ENCODE measurements at regions of chr2 and their contacts with region 1.

Region 1: DNA sequence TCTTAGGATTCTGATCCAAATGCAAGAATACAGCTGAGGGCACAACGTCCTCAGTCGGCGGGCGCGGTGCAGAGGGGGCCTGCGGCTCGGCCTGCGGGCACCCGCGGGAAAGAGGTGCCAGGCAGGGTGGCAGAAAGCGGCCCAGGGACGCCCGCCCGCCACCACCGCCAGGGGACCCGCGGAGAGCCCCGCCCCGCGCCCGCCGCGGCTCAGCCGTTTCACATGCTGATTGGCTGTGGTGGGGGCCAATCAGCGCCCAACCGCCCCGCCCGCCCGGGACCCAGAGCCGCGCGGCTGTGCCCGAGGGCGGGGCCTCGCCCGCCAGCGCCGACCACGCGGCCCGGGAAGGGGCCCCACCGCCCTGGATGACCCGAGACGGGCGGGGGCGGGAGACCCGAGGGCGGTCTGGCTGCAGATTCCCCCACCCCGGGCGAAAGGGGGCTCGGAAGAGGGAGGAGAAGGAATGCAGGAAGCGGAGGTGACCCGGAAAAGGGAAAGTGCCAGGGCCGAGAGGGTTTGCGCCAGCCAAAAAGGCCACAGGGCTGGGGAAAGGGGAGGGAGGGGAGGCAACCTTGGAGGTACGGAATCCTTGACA is 8.0 kb downstream of the IRS1 start:
- DNase-seq: peak; percentile 84 to 94 (median 92)
- ATAC-seq: peak; percentile 96
- H3K4me3 ChIP-seq: peak overlapping the region; percentile 70 to 72
- H3K4me3 Mint-ChIP-seq: peak overlapping the region; percentile 94
- H3K27ac ChIP-seq: peak overlapping the region; percentile 86 to 90
- H3K27ac Mint-ChIP-seq: peak overlapping the region; percentile 98
- H3K4me1 ChIP-seq: peaks cover 18% of the 10 kb centered on the region
- H3K4me1 Mint-ChIP-seq: peaks cover 44% of the 10 kb centered on the region
- H3K27me3 ChIP-seq: no peaks in the 10 kb centered on the region
- H3K27me3 Mint-ChIP-seq: no peaks in the 10 kb centered on the region
- CTCF ChIP-seq: peak; percentile 65

Region 2: GRCh38 chr2:225025917-225026571 is 1765.5 kb before region 1 on chr2:
- CTCF ChIA-PET with region 1: no interaction called
- POLR2A ChIA-PET with region 1: no interaction called
- intact Hi-C with region 1: loop called in 1 of 2 experiments (anchors 10 kb)
- DNase-seq: peak in 3 of 9 experiments; percentile 35 to 53 (median 39)
- ATAC-seq: peak; percentile 69
- H3K4me3 ChIP-seq: no peak overlapping the region
- H3K4me3 Mint-ChIP-seq: peak overlapping the region; percentile 12
- H3K27ac ChIP-seq: peak overlapping the region in 1 of 2 experiments; percentile 34
- H3K27ac Mint-ChIP-seq: peak overlapping the region; percentile 70
- H3K4me1 ChIP-seq: peaks cover 71% of the 10 kb centered on the region
- H3K4me1 Mint-ChIP-seq: peaks cover 85% of the 10 kb centered on the region
- H3K27me3 ChIP-seq: no peaks in the 10 kb centered on the region
- H3K27me3 Mint-ChIP-seq: no peaks in the 10 kb centered on the region
- CTCF ChIP-seq: no peak

Region 3: GRCh38 chr2:226618875-226619605 is 172.5 kb before region 1 on chr2:
- CTCF ChIA-PET with region 1: no interaction called
- POLR2A ChIA-PET with region 1: no interaction called
- intact Hi-C with region 1: no loop called
- DNase-seq: no peak
- ATAC-seq: no peak
- H3K4me3 ChIP-seq: no peak overlapping the region
- H3K4me3 Mint-ChIP-seq: no peak overlapping the region
- H3K27ac ChIP-seq: no peak overlapping the region
- H3K27ac Mint-ChIP-seq: no peak overlapping the region
- H3K4me1 ChIP-seq: no peaks in the 10 kb centered on the region
- H3K4me1 Mint-ChIP-seq: no peaks in the 10 kb centered on the region
- H3K27me3 ChIP-seq: no peaks in the 10 kb centered on the region
- H3K27me3 Mint-ChIP-seq: peaks cover 19% of the 10 kb centered on the region
- CTCF ChIP-seq: no peak

Region 4: GRCh38 chr2:226742347-226742746 is 49.2 kb before region 1 on chr2:
- CTCF ChIA-PET with region 1: no interaction called
- POLR2A ChIA-PET with region 1: no interaction called
- intact Hi-C with region 1: loop called in 1 of 2 experiments (anchors 5 kb)
- DNase-seq: no peak
- ATAC-seq: no peak
- H3K4me3 ChIP-seq: no peak overlapping the region
- H3K4me3 Mint-ChIP-seq: no peak overlapping the region
- H3K27ac ChIP-seq: no peak overlapping the region
- H3K27ac Mint-ChIP-seq: no peak overlapping the region
- H3K4me1 ChIP-seq: no peaks in the 10 kb centered on the region
- H3K4me1 Mint-ChIP-seq: peaks cover 11% of the 10 kb centered on the region
- H3K27me3 ChIP-seq: no peaks in the 10 kb centered on the region
- H3K27me3 Mint-ChIP-seq: no peaks in the 10 kb centered on the region
- CTCF ChIP-seq: no peak

Region 5: DNA sequence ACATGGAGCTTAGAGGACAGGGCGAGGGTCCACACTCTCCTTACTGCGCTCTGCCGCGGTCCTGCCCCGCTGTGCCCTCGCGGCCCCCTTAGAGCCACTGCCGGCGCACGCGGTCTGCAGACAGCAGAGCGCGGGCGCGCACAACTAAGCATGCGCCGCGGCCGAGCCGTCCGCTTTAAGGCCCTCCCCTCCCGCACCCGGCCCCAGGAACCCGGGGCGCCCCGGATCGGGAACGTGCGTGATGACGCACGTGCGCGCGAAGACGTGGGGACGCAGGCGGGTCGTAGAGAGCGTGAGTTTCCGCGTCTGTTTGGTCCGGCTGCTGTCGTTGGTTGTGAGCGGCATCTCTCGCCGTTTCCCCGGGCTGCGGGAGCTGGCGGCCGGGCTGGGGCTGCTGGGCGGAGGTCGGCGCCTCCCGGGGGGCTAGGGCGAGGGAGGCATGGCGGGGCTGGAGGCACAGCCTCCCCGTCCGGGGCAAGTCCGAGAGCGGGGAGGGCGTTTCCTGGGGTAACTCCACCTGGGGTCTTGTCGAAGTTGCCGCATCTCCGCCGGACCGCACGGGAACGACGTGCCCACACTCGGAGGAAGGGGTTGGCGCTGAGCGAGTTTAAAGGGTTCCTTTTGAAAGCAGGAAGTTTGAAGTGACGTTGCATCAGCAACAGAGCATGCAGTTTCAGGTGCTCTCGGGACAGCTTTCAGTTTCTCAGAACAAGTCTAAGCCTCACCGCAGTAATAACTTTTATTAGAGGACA is 44.4 kb after region 1 on chr2 and contains the start of gene RHBDD1:
- CTCF ChIA-PET with region 1: no interaction called
- POLR2A ChIA-PET with region 1: interaction called, 4 read pairs
- intact Hi-C with region 1: loop called (anchors 1 kb)
- DNase-seq: peak; percentile 88 to 98 (median 94)
- ATAC-seq: peak; percentile 82
- H3K4me3 ChIP-seq: peak within 1 kb of the TSS; percentile 64 to 74
- H3K4me3 Mint-ChIP-seq: peak within 1 kb of the TSS; percentile 90
- H3K27ac ChIP-seq: peak within 1 kb of the TSS; percentile 94 to 97
- H3K27ac Mint-ChIP-seq: peak within 1 kb of the TSS; percentile 98
- H3K4me1 ChIP-seq: peaks cover 51% of the 10 kb centered on the region
- H3K4me1 Mint-ChIP-seq: peaks cover 61% of the 10 kb centered on the region
- H3K27me3 ChIP-seq: no peaks in the 10 kb centered on the region
- H3K27me3 Mint-ChIP-seq: no peaks in the 10 kb centered on the region
- CTCF ChIP-seq: no peak
- total RNA-seq, gene RHBDD1: 29.7 to 30.9 TPM